ENCODE measurements at regions of chr9 and their contacts with region 1.

Region 1: DNA sequence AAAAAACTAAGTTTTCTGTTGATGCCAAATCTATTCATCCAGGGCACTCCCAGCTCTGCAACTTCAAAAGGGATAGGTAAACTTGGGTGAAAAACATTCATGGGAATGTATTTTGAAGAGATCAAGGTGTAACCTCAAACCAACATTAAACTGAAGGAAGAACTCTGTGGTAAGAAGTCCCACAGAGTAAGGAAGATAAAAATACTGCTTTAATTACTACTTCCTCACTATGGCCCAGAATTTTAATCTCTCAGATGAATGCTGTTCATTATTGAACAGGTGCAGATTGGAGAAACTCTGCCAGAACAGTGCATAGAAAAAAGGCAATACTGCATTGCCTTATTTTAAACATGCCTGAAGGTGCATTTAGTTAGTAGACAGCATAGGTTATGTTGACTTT is 37.6 kb upstream of the ANXA1 start:
- DNase-seq: no peak
- ATAC-seq: no peak
- H3K4me3 ChIP-seq: no peak overlapping the region
- H3K27ac ChIP-seq: no peak overlapping the region
- H3K4me1 ChIP-seq: peaks cover 21% of the 10 kb centered on the region
- H3K27me3 ChIP-seq: no peaks in the 10 kb centered on the region
- CTCF ChIP-seq: no peak

Region 2: DNA sequence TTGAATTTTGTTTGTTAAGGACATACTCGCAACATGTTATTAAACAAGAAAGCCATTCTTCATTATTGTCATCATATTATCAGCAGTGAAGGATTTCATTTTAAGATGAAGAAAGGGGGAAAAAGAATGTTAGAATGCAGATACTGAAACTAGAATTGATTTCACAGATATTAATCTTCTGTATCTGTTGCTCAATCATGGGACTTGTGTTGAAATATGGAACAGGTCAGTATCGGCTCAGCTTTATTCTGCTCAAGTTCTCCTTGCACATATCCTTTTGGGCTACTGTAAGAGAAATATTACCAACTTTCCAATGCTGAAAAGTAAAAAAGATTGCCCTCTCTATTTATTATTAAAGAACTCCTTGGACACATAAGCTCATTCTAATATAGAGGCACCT is 23.9 kb after region 1 on chr9:
- CTCF ChIA-PET with region 1: no interaction called
- POLR2A ChIA-PET with region 1: no interaction called
- intact Hi-C with region 1: no loop called
- DNase-seq: no peak
- ATAC-seq: no peak
- H3K4me3 ChIP-seq: no peak overlapping the region
- H3K27ac ChIP-seq: peak overlapping the region; percentile 33; the same call in 1 of the 2 replicates
- H3K4me1 ChIP-seq: peaks cover 45% of the 10 kb centered on the region
- H3K27me3 ChIP-seq: no peaks in the 10 kb centered on the region
- CTCF ChIP-seq: no peak

Region 3: DNA sequence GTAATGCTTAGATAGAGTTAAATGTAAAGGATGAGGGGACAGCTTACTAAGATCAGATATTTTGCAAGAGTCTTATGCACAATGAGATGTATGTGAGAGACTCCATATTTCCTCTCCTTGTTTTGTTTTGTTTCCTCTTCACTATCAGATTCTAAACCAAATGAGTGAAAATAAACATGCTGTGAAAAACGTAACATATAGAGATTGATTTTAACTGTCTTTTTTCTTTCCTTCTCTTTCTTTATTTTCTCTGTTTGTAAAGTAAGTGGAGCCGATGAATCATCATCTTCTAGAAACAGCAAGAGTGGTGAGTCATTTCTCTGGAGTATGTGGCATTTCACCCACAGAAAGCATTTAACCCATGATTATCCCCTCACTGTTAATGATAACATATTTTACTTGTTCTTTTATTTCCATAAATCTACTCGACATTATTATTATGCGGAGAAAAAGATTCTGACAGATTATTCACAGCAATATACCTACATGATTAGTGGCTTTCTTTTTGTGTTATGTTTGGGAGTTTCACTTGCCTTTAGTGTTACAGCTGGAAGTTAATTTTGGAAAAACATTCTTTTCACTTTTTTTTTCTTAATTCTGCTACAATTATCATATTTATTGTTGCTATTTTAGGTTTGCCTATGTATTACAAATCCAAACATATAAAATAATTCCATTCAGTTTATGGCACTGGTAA is 35.5 kb after region 1 on chr9:
- CTCF ChIA-PET with region 1: no interaction called
- POLR2A ChIA-PET with region 1: interaction called, 3 read pairs
- intact Hi-C with region 1: loop called (anchors 1 kb)
- DNase-seq: peak; percentile 79
- ATAC-seq: peak; percentile 23
- H3K4me3 ChIP-seq: peak overlapping the region; percentile 52
- H3K27ac ChIP-seq: peak overlapping the region; percentile 90
- H3K4me1 ChIP-seq: peaks cover 63% of the 10 kb centered on the region
- H3K27me3 ChIP-seq: no peaks in the 10 kb centered on the region
- CTCF ChIP-seq: no peak